Caco-2 (cell line): ENCODE measurements at regions of chr5 and their contacts with region 1.

Region 1: DNA sequence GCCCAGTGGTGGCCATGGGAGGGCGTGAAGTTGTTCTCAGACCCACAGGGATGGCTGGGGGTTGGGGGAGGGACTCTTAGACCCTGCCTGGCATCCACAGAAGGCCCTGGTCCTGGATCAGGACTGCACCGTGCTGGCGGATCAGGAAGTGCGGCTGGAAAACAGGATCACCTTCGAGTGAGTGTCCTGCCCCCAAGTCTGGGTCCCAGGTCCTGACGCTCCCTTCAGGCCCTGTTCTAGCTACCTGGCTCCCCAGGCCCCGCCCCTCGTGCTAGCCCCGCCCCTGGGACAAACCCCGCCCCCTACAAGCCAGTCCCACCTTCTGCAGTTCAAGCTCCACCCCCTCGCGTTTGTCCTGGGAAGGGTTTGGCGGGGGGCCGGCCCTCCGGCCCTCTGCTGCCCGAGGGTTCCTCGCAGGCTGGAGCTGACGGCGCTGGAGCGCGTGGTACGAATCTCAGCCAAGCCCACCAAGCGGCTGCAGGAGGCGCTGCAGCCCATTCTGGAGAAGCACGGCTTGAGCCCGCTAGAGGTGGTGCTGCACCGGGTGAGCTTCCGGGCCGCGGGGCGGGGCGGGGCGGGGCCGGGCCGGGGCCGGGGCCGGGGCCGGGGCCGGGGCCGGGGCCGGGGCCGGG is 12.9 kb downstream of the RGS14 start:
- DNase-seq: peak; percentile 97
- H3K4me3 ChIP-seq: peak overlapping the region; percentile 80
- H3K4me3 Mint-ChIP-seq: peak overlapping the region; percentile 83
- H3K27ac Mint-ChIP-seq: peak overlapping the region; percentile 59
- H3K4me1 ChIP-seq: peaks cover 25% of the 10 kb centered on the region
- H3K4me1 Mint-ChIP-seq: peaks cover 15% of the 10 kb centered on the region
- H3K27me3 ChIP-seq: no peaks in the 10 kb centered on the region
- H3K27me3 Mint-ChIP-seq: no peaks in the 10 kb centered on the region
- CTCF ChIP-seq: peak; percentile 68 to 89

Region 2: GRCh38 chr5:177276886-177277285 is 93.7 kb before region 1 on chr5:
- CTCF ChIA-PET with region 1: no interaction called
- POLR2A ChIA-PET with region 1: no interaction called
- intact Hi-C with region 1: no loop called
- DNase-seq: no peak
- H3K4me3 ChIP-seq: no peak overlapping the region
- H3K4me3 Mint-ChIP-seq: no peak overlapping the region
- H3K27ac Mint-ChIP-seq: no peak overlapping the region
- H3K4me1 ChIP-seq: no peaks in the 10 kb centered on the region
- H3K4me1 Mint-ChIP-seq: no peaks in the 10 kb centered on the region
- H3K27me3 ChIP-seq: no peaks in the 10 kb centered on the region
- H3K27me3 Mint-ChIP-seq: no peaks in the 10 kb centered on the region
- CTCF ChIP-seq: no peak

Region 3: DNA sequence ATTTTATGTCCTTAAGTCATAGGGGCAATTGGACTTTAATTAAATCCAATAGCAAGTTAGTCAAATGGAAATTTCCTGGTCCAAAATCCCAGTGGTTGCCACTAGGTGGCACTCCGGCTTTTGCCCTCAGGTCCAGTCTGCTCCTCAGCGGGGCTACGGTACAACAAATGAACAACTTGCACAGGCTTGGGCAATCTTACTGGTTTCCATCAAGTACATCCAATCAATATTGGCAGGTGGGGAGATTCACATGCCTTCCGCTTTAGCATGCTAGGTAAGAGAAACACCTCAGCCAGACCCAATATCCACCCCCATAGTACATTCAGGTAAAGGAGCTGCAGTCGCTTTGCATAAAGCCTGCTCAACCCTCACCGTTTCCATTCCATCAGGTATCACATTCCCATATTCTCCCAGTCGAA is 52.6 kb before region 1 on chr5:
- CTCF ChIA-PET with region 1: interaction called, 15 read pairs
- POLR2A ChIA-PET with region 1: no interaction called
- intact Hi-C with region 1: loop called (anchors 1 kb)
- DNase-seq: peak; percentile 83 to 84
- H3K4me3 ChIP-seq: no peak overlapping the region
- H3K4me3 Mint-ChIP-seq: no peak overlapping the region
- H3K27ac Mint-ChIP-seq: peak overlapping the region; percentile 42
- H3K4me1 ChIP-seq: no peaks in the 10 kb centered on the region
- H3K4me1 Mint-ChIP-seq: peaks cover 10% of the 10 kb centered on the region
- H3K27me3 ChIP-seq: no peaks in the 10 kb centered on the region
- H3K27me3 Mint-ChIP-seq: no peaks in the 10 kb centered on the region
- CTCF ChIP-seq: peak; percentile 92 to 93

Region 4: GRCh38 chr5:177351385-177352329 is 18.9 kb before region 1 on chr5 and contains the start of gene LMAN2:
- CTCF ChIA-PET with region 1: interaction called, 19 read pairs
- POLR2A ChIA-PET with region 1: interaction called, 22 read pairs
- intact Hi-C with region 1: loop called (anchors 2 kb)
- DNase-seq: peak; percentile 95 to 96
- H3K4me3 ChIP-seq: peak within 1 kb of the TSS; percentile 70
- H3K4me3 Mint-ChIP-seq: peak within 1 kb of the TSS; percentile 95
- H3K27ac Mint-ChIP-seq: peak within 1 kb of the TSS; percentile 100
- H3K4me1 ChIP-seq: peaks cover 12% of the 10 kb centered on the region; the same call in 1 of the 2 replicates
- H3K4me1 Mint-ChIP-seq: peaks cover 27% of the 10 kb centered on the region
- H3K27me3 ChIP-seq: no peaks in the 10 kb centered on the region
- H3K27me3 Mint-ChIP-seq: no peaks in the 10 kb centered on the region
- CTCF ChIP-seq: no peak
- total RNA-seq, gene LMAN2: 240 and 241 TPM in 2 replicates

Region 5: GRCh38 chr5:177390363-177391300 is 20.0 kb after region 1 on chr5:
- CTCF ChIA-PET with region 1: interaction called, 63 read pairs
- POLR2A ChIA-PET with region 1: interaction called, 3 read pairs
- intact Hi-C with region 1: loop called (anchors 2 kb)
- DNase-seq: peak; percentile 89 to 92
- H3K4me3 ChIP-seq: no peak overlapping the region
- H3K4me3 Mint-ChIP-seq: peak overlapping the region; percentile 43
- H3K27ac Mint-ChIP-seq: peak overlapping the region; percentile 53
- H3K4me1 ChIP-seq: peaks cover 22% of the 10 kb centered on the region
- H3K4me1 Mint-ChIP-seq: peaks cover 16% of the 10 kb centered on the region
- H3K27me3 ChIP-seq: no peaks in the 10 kb centered on the region
- H3K27me3 Mint-ChIP-seq: peaks cover 3% of the 10 kb centered on the region
- CTCF ChIP-seq: peak; percentile 92 to 98

Region 6: DNA sequence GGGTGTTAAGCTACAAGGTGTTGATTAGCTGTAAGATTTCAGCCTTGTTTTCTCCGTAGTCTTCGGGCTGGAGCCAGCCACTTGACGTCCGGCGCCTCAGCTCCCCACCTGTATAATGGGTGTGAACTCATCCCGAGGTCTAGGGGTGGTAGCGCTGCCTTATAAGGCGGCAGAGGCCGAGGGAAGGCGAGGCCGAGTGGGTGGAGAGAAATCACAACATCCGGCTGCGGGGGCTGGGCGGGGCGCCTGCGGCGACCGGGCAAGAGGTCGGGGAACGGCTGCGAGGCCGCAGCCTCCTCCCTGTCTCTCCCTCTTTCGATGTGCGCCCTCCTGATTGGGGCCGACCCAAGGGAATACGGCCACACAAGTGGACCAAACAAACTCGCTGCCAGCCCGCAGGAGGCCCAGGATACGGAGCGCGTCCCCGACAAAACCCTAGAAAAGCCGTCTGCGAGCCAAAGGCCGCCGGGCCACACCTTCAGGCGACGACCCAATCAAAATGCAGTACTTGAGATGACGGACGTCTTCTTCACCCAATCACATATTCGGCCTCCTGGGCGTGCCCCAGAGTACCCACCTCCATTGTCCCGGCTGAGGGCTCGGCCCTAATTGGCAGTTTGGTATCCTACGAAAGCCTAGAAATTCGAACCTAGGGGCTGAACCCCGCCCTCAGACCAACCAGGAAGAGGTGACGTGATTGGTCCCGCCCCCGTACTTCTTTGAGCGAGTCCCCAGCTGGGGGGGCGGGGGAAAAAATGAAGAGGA is 55.4 kb after region 1 on chr5:
- CTCF ChIA-PET with region 1: interaction called, 9 read pairs
- POLR2A ChIA-PET with region 1: interaction called, 15 read pairs
- intact Hi-C with region 1: no loop called
- DNase-seq: peak; percentile 100
- H3K4me3 ChIP-seq: peak overlapping the region; percentile 59
- H3K4me3 Mint-ChIP-seq: peak overlapping the region; percentile 92
- H3K27ac Mint-ChIP-seq: peak overlapping the region; percentile 99
- H3K4me1 ChIP-seq: peaks cover 15% of the 10 kb centered on the region
- H3K4me1 Mint-ChIP-seq: peaks cover 12% of the 10 kb centered on the region
- H3K27me3 ChIP-seq: no peaks in the 10 kb centered on the region
- H3K27me3 Mint-ChIP-seq: no peaks in the 10 kb centered on the region
- CTCF ChIP-seq: no peak

Region 7: DNA sequence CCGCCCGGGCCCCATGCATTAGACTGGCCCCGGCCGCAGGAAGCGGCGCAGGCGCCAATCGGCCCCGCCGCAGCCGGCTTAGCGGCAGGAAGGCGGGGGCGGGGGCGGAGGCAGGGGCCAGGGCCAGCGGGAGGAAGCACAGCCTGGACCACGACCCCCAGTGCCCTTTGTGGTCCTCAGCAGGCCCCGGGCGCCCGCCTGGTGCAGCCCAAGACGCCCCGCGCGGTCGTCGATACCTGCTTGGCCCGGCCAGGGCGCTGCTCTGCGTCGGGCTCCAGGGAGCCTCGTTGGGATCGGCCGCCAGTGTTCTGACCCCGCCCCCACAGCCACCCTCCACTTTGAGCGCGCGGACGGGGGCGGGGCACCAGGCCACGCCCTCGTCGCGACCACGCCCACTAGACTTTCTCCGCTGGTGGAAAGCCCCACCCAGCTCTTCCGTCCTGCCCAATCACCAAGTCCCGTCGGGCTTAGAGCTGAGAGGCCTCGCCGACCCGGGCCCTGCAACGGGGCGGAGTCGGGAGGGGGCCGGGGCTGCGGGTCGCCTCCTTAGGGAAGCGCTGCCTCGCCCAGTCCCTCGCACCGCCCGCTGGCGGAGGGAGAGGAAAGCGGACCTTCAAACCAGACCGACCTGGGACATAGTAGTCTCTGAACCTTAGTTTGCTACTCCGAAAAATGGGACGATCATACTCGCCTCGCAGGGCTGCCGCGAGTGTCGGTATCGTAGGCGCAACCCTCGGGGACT is 126.9 kb after region 1 on chr5 and contains the start of gene PDLIM7:
- CTCF ChIA-PET with region 1: interaction called, 10 read pairs
- POLR2A ChIA-PET with region 1: interaction called, 8 read pairs
- intact Hi-C with region 1: no loop called
- DNase-seq: peak; percentile 97 to 98
- H3K4me3 ChIP-seq: peak within 1 kb of the TSS; percentile 85
- H3K4me3 Mint-ChIP-seq: peak within 1 kb of the TSS; percentile 89
- H3K27ac Mint-ChIP-seq: peak within 1 kb of the TSS; percentile 63
- H3K4me1 ChIP-seq: peaks cover 25% of the 10 kb centered on the region
- H3K4me1 Mint-ChIP-seq: peaks cover 27% of the 10 kb centered on the region
- H3K27me3 ChIP-seq: no peaks in the 10 kb centered on the region
- H3K27me3 Mint-ChIP-seq: peaks cover 11% of the 10 kb centered on the region
- CTCF ChIP-seq: peak in 1 of 2 experiments; percentile 26
- total RNA-seq, gene PDLIM7: 49.1 and 56.8 TPM in 2 replicates